ENCODE measurements at regions of chr17 and their contacts with region 1.

Region 1: DNA sequence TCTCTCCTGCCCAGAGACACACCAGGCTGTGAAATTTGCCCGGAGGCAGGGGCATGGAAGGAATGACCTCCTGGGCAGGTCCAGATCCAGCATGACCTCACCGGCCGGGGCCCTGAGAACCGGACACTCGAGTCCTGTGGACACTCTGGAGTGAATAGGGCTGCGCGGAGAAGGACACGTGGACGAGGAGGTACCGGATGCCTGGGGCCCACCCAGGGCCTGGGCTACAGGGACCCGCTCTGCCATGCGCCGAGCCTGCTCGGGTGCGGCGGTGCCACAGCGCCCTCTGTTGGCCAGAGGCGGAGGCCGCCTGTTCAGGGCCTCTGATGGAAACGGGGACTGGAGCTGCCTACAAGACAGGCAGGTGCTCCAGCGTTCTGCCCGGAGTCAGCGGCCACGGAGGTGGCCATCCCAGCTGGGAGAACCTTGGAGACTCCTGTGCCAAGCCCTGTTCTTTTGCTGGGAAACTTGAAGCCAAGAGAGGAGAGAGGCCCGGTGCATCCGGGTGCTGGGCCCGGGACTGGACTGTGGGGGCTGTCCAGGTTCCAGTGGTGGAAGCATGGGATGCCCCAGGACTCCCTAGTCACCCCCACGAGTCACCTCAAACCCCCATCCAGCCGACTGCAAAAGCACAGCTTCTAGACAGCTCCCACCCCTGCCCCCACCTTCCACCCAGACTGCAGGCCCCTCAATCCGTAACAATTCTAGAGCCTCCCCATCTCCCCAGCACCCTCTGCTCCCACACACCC is 19.3 kb upstream of the NXPH3 start:
- DNase-seq: peak; percentile 92 to 98
- H3K4me3 ChIP-seq: peak overlapping the region; percentile 8; the same call in 1 of the 2 replicates
- H3K4me3 Mint-ChIP-seq: peak overlapping the region; percentile 27
- H3K27ac Mint-ChIP-seq: no peak overlapping the region
- H3K4me1 ChIP-seq: peaks cover 3% of the 10 kb centered on the region; the same call in 1 of the 2 replicates
- H3K4me1 Mint-ChIP-seq: peaks cover 12% of the 10 kb centered on the region
- H3K27me3 ChIP-seq: no peaks in the 10 kb centered on the region
- H3K27me3 Mint-ChIP-seq: peaks cover 6% of the 10 kb centered on the region
- CTCF ChIP-seq: peak; percentile 100

Region 2: DNA sequence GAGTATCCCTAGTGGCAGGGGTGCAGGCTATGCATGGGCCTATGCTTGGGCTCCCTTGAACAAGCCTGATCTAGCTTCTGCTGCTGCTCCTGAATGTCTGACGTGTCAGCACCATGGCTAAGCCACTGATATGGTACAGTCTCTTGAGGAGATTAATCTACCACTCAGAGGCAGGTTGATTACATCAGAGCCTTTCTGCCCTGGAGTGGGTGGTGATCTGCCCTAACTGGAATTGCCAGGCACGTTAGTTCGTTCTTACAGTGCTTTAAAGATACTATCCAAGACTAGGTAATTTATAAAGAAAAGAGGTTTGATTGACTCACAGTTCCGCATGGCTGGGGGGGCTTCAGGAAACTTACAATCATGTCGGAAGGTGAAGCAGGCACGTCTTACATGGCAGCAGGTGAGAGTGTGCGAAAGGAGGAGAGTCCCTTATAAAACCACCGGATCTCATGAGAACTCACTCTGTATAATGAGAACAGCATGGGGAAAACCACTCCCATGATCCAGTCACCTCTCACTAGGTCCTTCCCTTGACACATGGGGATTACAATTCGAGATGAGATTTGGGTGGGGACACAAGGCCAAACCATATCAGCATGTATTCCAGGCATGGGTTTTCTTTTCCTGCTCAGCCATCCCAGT is 465.3 kb before region 1 on chr17:
- CTCF ChIA-PET with region 1: no interaction called
- POLR2A ChIA-PET with region 1: no interaction called
- intact Hi-C with region 1: no loop called
- DNase-seq: peak in 1 of 2 experiments; percentile 30
- H3K4me3 ChIP-seq: no peak overlapping the region
- H3K4me3 Mint-ChIP-seq: no peak overlapping the region
- H3K27ac Mint-ChIP-seq: no peak overlapping the region
- H3K4me1 ChIP-seq: no peaks in the 10 kb centered on the region
- H3K4me1 Mint-ChIP-seq: peaks cover 9% of the 10 kb centered on the region
- H3K27me3 ChIP-seq: no peaks in the 10 kb centered on the region
- H3K27me3 Mint-ChIP-seq: no peaks in the 10 kb centered on the region
- CTCF ChIP-seq: no peak

Region 3: GRCh38 chr17:49407981-49408501 is 148.4 kb before region 1 on chr17:
- CTCF ChIA-PET with region 1: interaction called, 106 read pairs
- POLR2A ChIA-PET with region 1: interaction called, 4 read pairs
- intact Hi-C with region 1: loop called (anchors 1 kb)
- DNase-seq: peak; percentile 96 to 98
- H3K4me3 ChIP-seq: no peak overlapping the region
- H3K4me3 Mint-ChIP-seq: no peak overlapping the region
- H3K27ac Mint-ChIP-seq: peak overlapping the region; percentile 17
- H3K4me1 ChIP-seq: peaks cover 5% of the 10 kb centered on the region; the same call in 1 of the 2 replicates
- H3K4me1 Mint-ChIP-seq: peaks cover 10% of the 10 kb centered on the region
- H3K27me3 ChIP-seq: no peaks in the 10 kb centered on the region
- H3K27me3 Mint-ChIP-seq: no peaks in the 10 kb centered on the region
- CTCF ChIP-seq: peak; percentile 100

Region 4: GRCh38 chr17:49496183-49496866 is 60.1 kb before region 1 on chr17:
- CTCF ChIA-PET with region 1: interaction called, 91 read pairs
- POLR2A ChIA-PET with region 1: no interaction called
- intact Hi-C with region 1: loop called (anchors 1 kb)
- DNase-seq: peak in 1 of 2 experiments; percentile 95
- H3K4me3 ChIP-seq: peak overlapping the region; percentile 34
- H3K4me3 Mint-ChIP-seq: peak overlapping the region; percentile 67
- H3K27ac Mint-ChIP-seq: no peak overlapping the region
- H3K4me1 ChIP-seq: peaks cover 27% of the 10 kb centered on the region
- H3K4me1 Mint-ChIP-seq: peaks cover 14% of the 10 kb centered on the region
- H3K27me3 ChIP-seq: peaks cover 29% of the 10 kb centered on the region
- H3K27me3 Mint-ChIP-seq: peaks cover 59% of the 10 kb centered on the region
- CTCF ChIP-seq: peak; percentile 87 to 99

Region 5: GRCh38 chr17:49515196-49515770 is 41.1 kb before region 1 on chr17:
- CTCF ChIA-PET with region 1: interaction called, 30 read pairs
- POLR2A ChIA-PET with region 1: no interaction called
- intact Hi-C with region 1: loop called (anchors 1 kb)
- DNase-seq: peak; percentile 62 to 63
- H3K4me3 ChIP-seq: no peak overlapping the region
- H3K4me3 Mint-ChIP-seq: no peak overlapping the region
- H3K27ac Mint-ChIP-seq: peak overlapping the region; percentile 5
- H3K4me1 ChIP-seq: no peaks in the 10 kb centered on the region
- H3K4me1 Mint-ChIP-seq: peaks cover 20% of the 10 kb centered on the region
- H3K27me3 ChIP-seq: no peaks in the 10 kb centered on the region
- H3K27me3 Mint-ChIP-seq: peaks cover 8% of the 10 kb centered on the region
- CTCF ChIP-seq: no peak

Region 6: GRCh38 chr17:49667854-49668253 is 111.5 kb after region 1 on chr17:
- CTCF ChIA-PET with region 1: no interaction called
- POLR2A ChIA-PET with region 1: no interaction called
- intact Hi-C with region 1: no loop called
- DNase-seq: no peak
- H3K4me3 ChIP-seq: no peak overlapping the region
- H3K4me3 Mint-ChIP-seq: no peak overlapping the region
- H3K27ac Mint-ChIP-seq: no peak overlapping the region
- H3K4me1 ChIP-seq: no peaks in the 10 kb centered on the region
- H3K4me1 Mint-ChIP-seq: no peaks in the 10 kb centered on the region
- H3K27me3 ChIP-seq: no peaks in the 10 kb centered on the region
- H3K27me3 Mint-ChIP-seq: no peaks in the 10 kb centered on the region
- CTCF ChIP-seq: no peak

Region 7: GRCh38 chr17:49687878-49688491 is 131.6 kb after region 1 on chr17:
- CTCF ChIA-PET with region 1: interaction called, 14 read pairs
- POLR2A ChIA-PET with region 1: no interaction called
- intact Hi-C with region 1: no loop called
- DNase-seq: peak in 1 of 2 experiments; percentile 38
- H3K4me3 ChIP-seq: no peak overlapping the region
- H3K4me3 Mint-ChIP-seq: no peak overlapping the region
- H3K27ac Mint-ChIP-seq: no peak overlapping the region
- H3K4me1 ChIP-seq: peaks cover 5% of the 10 kb centered on the region
- H3K4me1 Mint-ChIP-seq: peaks cover 7% of the 10 kb centered on the region
- H3K27me3 ChIP-seq: no peaks in the 10 kb centered on the region
- H3K27me3 Mint-ChIP-seq: peaks cover 7% of the 10 kb centered on the region
- CTCF ChIP-seq: no peak

Region 8: GRCh38 chr17:49763735-49764558 is 207.6 kb after region 1 on chr17 and contains the start of gene FAM117A:
- CTCF ChIA-PET with region 1: interaction called, 10 read pairs
- POLR2A ChIA-PET with region 1: interaction called, 4 read pairs
- intact Hi-C with region 1: no loop called
- DNase-seq: peak; percentile 100
- H3K4me3 ChIP-seq: peak within 1 kb of the TSS; percentile 76
- H3K4me3 Mint-ChIP-seq: peak within 1 kb of the TSS; percentile 98
- H3K27ac Mint-ChIP-seq: peak within 1 kb of the TSS; percentile 81
- H3K4me1 ChIP-seq: peaks cover 9% of the 10 kb centered on the region
- H3K4me1 Mint-ChIP-seq: peaks cover 8% of the 10 kb centered on the region
- H3K27me3 ChIP-seq: 0 out of 2 replicates have a peak, but pooled peaks cover 1% of the 10 kb centered on the region
- H3K27me3 Mint-ChIP-seq: peaks cover 13% of the 10 kb centered on the region
- CTCF ChIP-seq: no peak
- total RNA-seq, gene FAM117A: 36.8 and 41.5 TPM in 2 replicates